HCT116 (cell line): ENCODE measurements at regions of chr5 and their contacts with region 1.

Region 1: DNA sequence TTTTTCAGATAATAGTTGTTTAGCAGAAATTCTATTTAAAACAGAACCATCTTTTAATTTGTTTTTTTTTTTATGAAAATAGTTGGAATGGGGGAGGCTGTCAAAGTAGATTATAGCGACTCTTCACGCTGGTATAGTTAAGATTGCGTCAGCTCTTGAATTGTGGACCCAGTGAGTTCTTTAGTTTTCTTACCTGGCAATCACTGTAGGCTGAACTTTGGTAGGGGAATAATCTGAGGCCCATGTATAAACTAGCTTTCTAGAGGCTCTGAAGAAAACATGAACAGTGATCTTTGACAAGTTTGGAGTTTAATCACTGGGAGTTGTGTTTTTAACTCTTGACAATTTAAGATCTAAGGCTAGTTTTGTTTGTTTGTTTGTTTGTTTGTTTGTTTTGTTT is 80.8 kb downstream of the CD180 start:
- DNase-seq: no peak
- ATAC-seq: no peak
- H3K4me3 ChIP-seq: no peak overlapping the region
- H3K27ac ChIP-seq: no peak overlapping the region
- H3K4me1 ChIP-seq: no peaks in the 10 kb centered on the region
- H3K27me3 ChIP-seq: peaks cover 12% of the 10 kb centered on the region; the same call in 1 of the 2 replicates
- CTCF ChIP-seq: no peak
- POLR2A ChIP-seq: no peak
- RAD21 ChIP-seq: no peak

Region 2: DNA sequence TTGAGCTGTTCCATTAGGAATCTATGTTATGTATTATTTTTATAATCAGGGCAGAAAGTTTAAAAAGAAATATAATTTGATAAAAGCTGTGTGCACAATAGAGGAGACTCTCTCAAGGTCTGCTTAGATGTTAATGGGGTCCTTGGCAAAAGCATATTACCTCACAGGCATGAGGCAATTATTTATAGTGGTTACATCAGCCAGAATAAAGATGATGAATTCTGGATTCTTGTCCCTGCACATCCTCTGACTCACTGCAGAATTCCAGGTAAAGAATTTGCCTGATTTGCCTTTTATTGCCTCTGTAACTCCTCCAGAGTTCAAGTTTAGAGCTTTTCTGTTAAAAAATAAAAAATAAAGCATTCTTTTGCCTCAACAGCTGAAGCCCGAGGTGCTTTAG is 266.0 kb before region 1 on chr5:
- CTCF ChIA-PET with region 1: no interaction called
- POLR2A ChIA-PET with region 1: no interaction called
- RAD21 ChIA-PET with region 1: no interaction called
- intact Hi-C with region 1: no loop called
- DNase-seq: no peak
- ATAC-seq: no peak
- H3K4me3 ChIP-seq: no peak overlapping the region
- H3K27ac ChIP-seq: no peak overlapping the region
- H3K4me1 ChIP-seq: peaks cover 0 to 4% of the 10 kb centered on the region in 2 experiments; a peak in 2 of 4 replicates
- H3K27me3 ChIP-seq: peaks cover 28% of the 10 kb centered on the region
- CTCF ChIP-seq: no peak
- POLR2A ChIP-seq: no peak
- RAD21 ChIP-seq: no peak

Region 3: GRCh38 chr5:67133776-67134175 is 18.0 kb after region 1 on chr5:
- CTCF ChIA-PET with region 1: no interaction called
- POLR2A ChIA-PET with region 1: no interaction called
- RAD21 ChIA-PET with region 1: no interaction called
- intact Hi-C with region 1: loop called (anchors 2 kb)
- DNase-seq: no peak
- ATAC-seq: no peak
- H3K4me3 ChIP-seq: no peak overlapping the region
- H3K27ac ChIP-seq: no peak overlapping the region
- H3K4me1 ChIP-seq: no peaks in the 10 kb centered on the region
- H3K27me3 ChIP-seq: peaks cover 13% of the 10 kb centered on the region; the same call in 1 of the 2 replicates
- CTCF ChIP-seq: no peak
- POLR2A ChIP-seq: no peak
- RAD21 ChIP-seq: no peak